SK-N-SH (cell line): ENCODE measurements at regions of chr19 and their contacts with region 1.

Region 1: DNA sequence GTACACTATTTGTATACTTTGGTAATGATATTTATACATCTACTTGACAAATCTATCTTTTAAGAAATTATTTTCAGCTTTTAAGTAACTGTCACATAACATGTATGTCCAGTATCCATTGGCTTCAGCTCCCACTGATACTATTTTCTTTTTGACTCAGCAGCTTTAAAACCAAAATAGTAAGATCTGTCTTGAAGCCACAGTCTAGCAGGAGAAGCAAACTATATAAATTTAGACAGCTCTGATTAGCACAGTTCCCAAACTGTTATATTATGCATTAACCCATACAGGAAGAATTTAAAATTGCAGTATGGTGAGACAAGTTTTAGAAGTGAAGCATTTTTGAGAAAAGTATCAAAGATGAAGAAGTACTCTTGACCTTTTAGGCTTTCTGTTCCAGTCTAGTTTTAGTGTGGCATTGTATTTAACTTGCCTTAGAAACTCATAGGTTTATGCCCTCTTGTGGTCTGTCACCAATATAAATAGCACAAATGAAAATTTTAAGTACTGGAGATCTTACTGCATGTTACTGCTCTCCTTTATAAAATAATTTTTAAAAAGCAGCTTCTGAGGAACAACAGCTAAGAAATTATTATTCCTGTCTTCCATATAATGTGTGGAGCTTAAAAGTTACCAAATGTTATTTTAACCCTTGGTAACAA is 24.7 kb downstream of the URI1 start:
- DNase-seq: no peak
- H3K4me3 ChIP-seq: no peak overlapping the region
- H3K27ac ChIP-seq: peak overlapping the region; percentile 30 to 69
- H3K4me1 ChIP-seq: peaks cover 15 to 63% of the 10 kb centered on the region in 2 experiments; a peak in 3 of 4 replicates
- H3K27me3 ChIP-seq: no peaks in the 10 kb centered on the region
- CTCF ChIP-seq: peak; percentile 59
- EP300 ChIP-seq: no peak
- RAD21 ChIP-seq: peak; percentile 35; the same call in 1 of the 2 replicates

Region 2: DNA sequence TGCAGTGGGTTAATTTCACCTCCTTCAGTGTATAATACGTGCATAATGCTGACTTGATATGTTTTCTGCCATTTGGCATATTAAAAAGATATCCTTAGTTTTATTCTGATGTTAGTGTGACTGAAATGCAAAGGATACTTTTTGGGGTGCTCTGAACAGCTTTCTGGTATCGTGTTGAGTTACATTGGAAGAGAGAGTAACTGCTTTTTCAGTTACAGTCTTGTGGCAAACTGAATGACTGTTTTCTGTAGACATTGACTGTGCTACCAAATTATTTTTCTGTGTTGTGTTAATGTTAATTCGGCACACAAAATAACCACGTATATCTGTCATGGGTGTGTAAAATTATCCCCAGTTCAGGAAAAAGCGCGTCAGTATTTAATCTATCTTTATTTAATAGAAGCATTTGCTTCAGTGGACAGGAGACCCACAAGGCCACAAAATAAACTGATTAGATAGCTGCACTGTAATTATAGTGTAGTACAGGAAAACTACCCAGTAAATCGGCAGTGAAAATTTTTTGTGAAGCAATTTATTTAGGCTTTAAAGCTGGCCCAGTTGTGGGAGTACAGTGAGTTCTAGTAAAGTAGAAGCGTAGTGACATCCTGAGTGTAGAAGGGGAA is 22.2 kb before region 1 on chr19:
- CTCF ChIA-PET with region 1: interaction called, 13 read pairs
- POLR2A ChIA-PET with region 1: interaction called, 5 read pairs
- DNase-seq: no peak
- H3K4me3 ChIP-seq: peak overlapping the region in 1 of 2 experiments; percentile 21; a peak in 1 of 4 replicates
- H3K27ac ChIP-seq: peak overlapping the region in 1 of 2 experiments; percentile 47; a peak in 2 of 4 replicates
- H3K4me1 ChIP-seq: peaks cover 4 to 6% of the 10 kb centered on the region in 2 experiments; a peak in 3 of 4 replicates
- H3K27me3 ChIP-seq: no peaks in the 10 kb centered on the region
- CTCF ChIP-seq: no peak
- EP300 ChIP-seq: no peak
- RAD21 ChIP-seq: no peak

Region 3: GRCh38 chr19:29988351-29988750 is 21.6 kb after region 1 on chr19:
- CTCF ChIA-PET with region 1: interaction called, 17 read pairs
- POLR2A ChIA-PET with region 1: no interaction called
- DNase-seq: no peak
- H3K4me3 ChIP-seq: no peak overlapping the region
- H3K27ac ChIP-seq: no peak overlapping the region
- H3K4me1 ChIP-seq: 0 out of 4 replicates have a peak, but pooled peaks cover 0 to 2% of the 10 kb centered on the region in 2 experiments
- H3K27me3 ChIP-seq: no peaks in the 10 kb centered on the region
- CTCF ChIP-seq: no peak
- EP300 ChIP-seq: no peak
- RAD21 ChIP-seq: no peak

Region 4: DNA sequence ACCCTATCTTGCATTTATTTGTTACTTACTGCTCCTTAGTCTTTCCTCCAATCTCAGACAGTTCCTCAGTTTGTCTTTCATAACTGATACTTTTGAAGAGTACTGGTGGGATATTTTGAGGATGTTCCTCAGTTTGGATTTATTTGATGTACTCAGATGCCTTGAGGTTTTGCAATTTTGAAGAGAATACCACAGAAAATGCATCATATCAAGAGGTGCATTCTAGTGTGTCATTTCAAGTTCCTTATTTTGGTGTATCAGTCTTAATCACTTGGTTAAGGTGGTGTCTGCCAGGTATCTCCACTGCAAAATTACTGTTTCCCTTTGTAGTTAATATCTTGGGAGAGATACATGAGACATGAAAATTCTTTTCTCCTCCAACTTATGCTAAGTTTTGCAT is 50.5 kb after region 1 on chr19:
- CTCF ChIA-PET with region 1: no interaction called
- POLR2A ChIA-PET with region 1: no interaction called
- DNase-seq: no peak
- H3K4me3 ChIP-seq: no peak overlapping the region
- H3K27ac ChIP-seq: no peak overlapping the region
- H3K4me1 ChIP-seq: no peaks in the 10 kb centered on the region
- H3K27me3 ChIP-seq: no peaks in the 10 kb centered on the region
- CTCF ChIP-seq: no peak
- EP300 ChIP-seq: no peak
- RAD21 ChIP-seq: no peak